ENCODE measurements at regions of chr3 and their contacts with region 1.

Region 1: GRCh38 chr3:196711838-196712513 is at the starts of genes CEP19 and PIGX:
- DNase-seq: peak; percentile 91
- H3K4me3 Mint-ChIP-seq: peak within 1 kb of the TSS; percentile 82
- H3K27ac Mint-ChIP-seq: peak within 1 kb of the TSS; percentile 96
- H3K4me1 Mint-ChIP-seq: peaks cover 43% of the 10 kb centered on the region
- H3K27me3 Mint-ChIP-seq: no peaks in the 10 kb centered on the region
- total RNA-seq, gene CEP19: 5.3 to 5.5 TPM
- total RNA-seq, gene PIGX: 47.2 to 50.0 TPM

Region 2: DNA sequence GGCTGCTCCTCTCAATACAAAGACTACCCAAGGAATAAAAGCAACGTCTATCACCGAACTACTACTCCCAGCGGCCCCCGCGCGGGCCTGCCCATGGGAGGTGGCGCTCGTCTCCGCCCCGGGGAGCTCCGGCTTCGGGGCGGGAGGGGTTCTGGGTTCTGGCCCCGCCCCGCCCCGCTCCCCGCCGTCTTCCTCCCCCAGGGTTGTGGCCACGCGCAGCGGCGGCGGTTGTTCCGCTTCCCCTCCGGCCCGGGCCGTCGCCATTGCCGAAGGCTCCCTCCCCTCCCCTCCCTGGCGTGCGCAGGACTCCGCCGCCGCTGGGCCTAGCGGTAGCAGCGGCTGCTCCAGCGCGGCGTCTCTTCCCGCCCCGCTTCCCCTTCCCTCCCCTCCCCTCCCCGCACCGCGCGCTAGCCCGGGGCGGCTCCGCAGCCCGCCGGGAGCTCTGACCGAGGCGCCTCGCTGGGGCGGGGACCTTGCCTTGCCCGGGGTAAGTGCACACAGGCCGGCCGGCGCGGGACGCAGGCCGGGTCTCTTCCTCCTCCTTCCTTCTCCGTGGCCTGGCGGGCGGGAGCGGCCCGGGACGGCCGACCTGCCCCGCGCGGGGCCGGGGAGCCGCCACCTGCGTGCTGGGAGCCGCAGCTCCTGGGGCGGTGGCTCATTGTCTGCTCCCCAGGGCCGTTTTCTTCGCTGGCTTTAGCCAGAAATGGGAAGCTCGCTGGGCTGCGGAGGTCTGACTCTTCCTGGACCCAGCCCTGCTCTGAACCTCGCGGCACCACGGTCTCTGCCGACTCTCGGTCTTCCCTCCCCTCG is 27.9 kb after region 1 on chr3 and contains the start of gene PAK2:
- CTCF ChIA-PET with region 1: interaction called, 3 read pairs
- POLR2A ChIA-PET with region 1: interaction called, 48 read pairs
- DNase-seq: peak; percentile 91
- H3K4me3 Mint-ChIP-seq: peak within 1 kb of the TSS; percentile 99
- H3K27ac Mint-ChIP-seq: peak within 1 kb of the TSS; percentile 98
- H3K4me1 Mint-ChIP-seq: peaks cover 28% of the 10 kb centered on the region
- H3K27me3 Mint-ChIP-seq: no peaks in the 10 kb centered on the region
- total RNA-seq, gene PAK2: 118 to 119 TPM

Region 3: GRCh38 chr3:196763179-196763822 is 51.3 kb after region 1 on chr3:
- CTCF ChIA-PET with region 1: no interaction called
- POLR2A ChIA-PET with region 1: no interaction called
- DNase-seq: no peak
- H3K4me3 Mint-ChIP-seq: no peak overlapping the region
- H3K27ac Mint-ChIP-seq: no peak overlapping the region
- H3K4me1 Mint-ChIP-seq: peaks cover 11% of the 10 kb centered on the region
- H3K27me3 Mint-ChIP-seq: no peaks in the 10 kb centered on the region

Region 4: GRCh38 chr3:196969660-196970546 is 257.9 kb after region 1 on chr3:
- CTCF ChIA-PET with region 1: no interaction called
- POLR2A ChIA-PET with region 1: no interaction called
- DNase-seq: peak; percentile 73
- H3K4me3 Mint-ChIP-seq: peak overlapping the region; percentile 58
- H3K27ac Mint-ChIP-seq: peak overlapping the region; percentile 49
- H3K4me1 Mint-ChIP-seq: peaks cover 12% of the 10 kb centered on the region
- H3K27me3 Mint-ChIP-seq: peaks cover 11% of the 10 kb centered on the region

Measured in activated CD4-positive, alpha-beta memory T cell treated with anti-CD3 and anti-CD28 coated beads, Interleukin-2, amount 10 ng/mL, durations not matched to agents 7 days and 5 days (primary cell).